Right ventricle myocardium inferior (tissue), 1 donor: ENCODE measurements at regions of chr6 and their contacts with region 1.

Region 1: DNA sequence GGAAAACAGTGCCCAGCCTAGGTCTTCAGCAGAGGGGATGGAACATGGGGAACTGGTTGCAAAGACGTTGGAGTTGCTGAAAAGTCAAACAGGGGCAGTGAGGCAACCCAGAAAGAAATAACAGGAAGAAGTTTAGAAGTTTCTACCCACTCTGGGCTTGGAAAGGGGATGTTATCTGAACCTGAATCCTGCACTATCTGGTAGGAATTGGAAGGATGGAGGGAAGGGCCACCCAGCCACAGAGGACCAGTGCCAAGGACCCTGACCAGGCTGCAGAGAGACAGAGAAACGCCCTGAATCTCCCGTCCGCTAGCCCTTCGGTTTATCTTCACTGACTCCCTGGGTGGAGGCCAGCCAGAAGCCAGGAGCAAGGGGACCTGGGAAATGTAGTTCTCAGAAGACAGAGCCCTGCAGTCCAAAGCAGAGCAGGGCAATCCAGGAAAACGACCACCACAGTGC is 217.3 kb upstream of the RREB1 start:
- DNase-seq: peak; percentile 76
- ATAC-seq: peak; percentile 47

Region 2: DNA sequence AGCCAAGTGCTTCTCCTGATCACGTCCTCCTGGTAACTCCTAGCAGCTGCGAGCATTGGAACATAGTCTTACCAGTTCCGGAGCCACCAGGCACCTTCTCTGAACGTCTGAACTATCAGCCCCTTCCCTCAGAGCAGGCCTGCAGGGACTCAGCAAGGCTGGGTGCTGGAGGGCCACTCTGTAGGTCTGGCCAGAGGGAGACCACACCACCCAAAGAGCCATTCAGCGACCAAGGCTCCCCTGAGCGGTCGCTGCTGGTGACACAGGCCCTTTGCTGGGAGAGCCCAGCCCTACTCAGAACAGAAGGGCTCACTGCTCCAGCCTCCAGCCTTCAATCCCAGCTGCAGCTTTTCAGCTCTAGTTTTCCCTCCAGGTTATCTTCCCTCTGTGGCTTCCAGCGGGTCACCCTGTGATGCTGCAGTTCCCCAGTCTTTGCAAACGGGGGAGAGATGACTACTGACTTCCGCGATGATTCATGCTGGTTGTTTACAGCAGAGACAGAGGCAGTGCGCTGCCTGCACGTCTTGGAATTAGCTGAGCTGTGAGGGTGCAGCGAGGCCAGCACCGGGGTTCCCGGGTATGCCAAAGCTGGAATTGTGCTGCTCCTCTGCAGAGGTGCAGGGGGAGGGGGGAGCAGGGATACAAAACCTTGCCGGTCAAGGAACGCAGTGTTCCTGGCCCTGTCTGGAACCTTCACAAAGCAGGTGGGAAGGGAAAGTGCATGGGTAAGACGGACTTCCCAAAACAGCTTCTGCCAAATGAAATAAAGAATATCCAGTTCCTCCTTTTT is 140.5 kb before region 1 on chr6:
- intact Hi-C with region 1: loop called (anchors 5 kb)
- DNase-seq: peak; percentile 84
- ATAC-seq: peak; percentile 49

Region 3: GRCh38 chr6:6840831-6841291 is 49.6 kb before region 1 on chr6:
- intact Hi-C with region 1: no loop called
- DNase-seq: no peak
- ATAC-seq: no peak

Region 4: GRCh38 chr6:7140631-7141378 is 250.4 kb after region 1 on chr6:
- intact Hi-C with region 1: no loop called
- DNase-seq: peak; percentile 95
- ATAC-seq: peak; percentile 95